Prostate gland (tissue), 2 donors: ENCODE measurements at regions of chr17 and their contacts with region 1.

Region 1: GRCh38 chr17:68247445-68248198 is at the start of gene AMZ2:
- DNase-seq: peak; percentile 91
- H3K4me3 ChIP-seq: peak within 1 kb of the TSS; percentile 79 to 90
- H3K27ac ChIP-seq: peak within 1 kb of the TSS; percentile 91 to 97
- H3K4me1 ChIP-seq: no peaks in the 10 kb centered on the region
- H3K27me3 ChIP-seq: no peaks in the 10 kb centered on the region
- CTCF ChIP-seq: peak in 2 of 4 experiments; percentile 12 to 27
- POLR2A ChIP-seq: peak; percentile 95
- total RNA-seq, gene AMZ2: 51.0 to 57.4 TPM

Region 2: GRCh38 chr17:68205251-68205807 is 42.3 kb before region 1 on chr17:
- intact Hi-C with region 1: loop called (anchors 5 kb)
- DNase-seq: peak; percentile 93
- H3K4me3 ChIP-seq: peak overlapping the region; percentile 84 to 87
- H3K27ac ChIP-seq: peak overlapping the region; percentile 82 to 88
- H3K4me1 ChIP-seq: no peaks in the 10 kb centered on the region
- H3K27me3 ChIP-seq: no peaks in the 10 kb centered on the region
- CTCF ChIP-seq: peak; percentile 90 to 98 (median 94)
- POLR2A ChIP-seq: peak; percentile 87

Region 3: DNA sequence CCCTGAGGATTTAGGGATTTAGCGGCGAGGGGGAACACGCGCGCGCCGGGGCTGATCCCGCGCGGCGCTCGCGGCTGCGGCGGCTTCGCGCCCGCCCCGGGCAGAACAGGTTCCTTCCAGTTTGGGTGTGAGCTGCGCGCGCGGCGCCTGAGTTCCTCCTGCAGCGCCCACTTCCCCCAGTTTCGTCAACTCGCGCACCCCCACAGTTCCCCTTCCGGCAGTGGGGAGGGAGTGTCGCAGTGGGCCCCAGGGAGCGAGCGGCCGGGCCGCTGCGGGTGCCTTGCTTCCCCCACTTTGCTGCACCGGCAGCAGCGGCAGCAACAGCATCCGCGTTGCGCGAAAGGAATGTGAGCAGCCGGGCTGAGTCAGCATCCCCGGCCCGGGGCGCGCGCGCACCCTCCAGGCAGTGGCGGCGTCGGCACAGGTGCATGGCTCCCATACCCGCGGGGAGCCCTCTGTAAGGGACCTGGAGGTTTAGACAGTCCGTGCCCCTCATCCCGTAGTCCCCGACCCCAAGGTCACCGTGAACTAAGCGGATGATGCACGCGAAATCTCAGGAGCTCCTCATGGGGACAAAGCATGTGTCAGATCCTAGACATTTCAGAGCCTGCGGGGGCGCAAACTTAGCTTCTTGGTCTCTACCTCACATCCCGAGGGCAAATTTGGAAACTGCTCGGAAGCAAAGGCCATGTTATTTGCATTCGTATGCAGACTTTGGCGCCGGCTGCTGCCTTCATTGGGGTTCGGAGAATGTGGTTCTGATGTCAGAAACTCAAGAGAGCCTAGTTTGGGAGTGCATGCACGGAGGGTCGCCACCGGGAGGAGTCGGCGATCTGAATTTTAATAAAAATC is 44.4 kb after region 1 on chr17:
- intact Hi-C with region 1: no loop called
- DNase-seq: peak; percentile 39
- H3K4me3 ChIP-seq: peak overlapping the region; percentile 45 to 56
- H3K27ac ChIP-seq: peak overlapping the region; percentile 11 to 26
- H3K4me1 ChIP-seq: peaks cover 12% of the 10 kb centered on the region
- H3K27me3 ChIP-seq: no peaks in the 10 kb centered on the region
- CTCF ChIP-seq: peak in 1 of 4 experiments; percentile 7
- POLR2A ChIP-seq: no peak

Region 4: DNA sequence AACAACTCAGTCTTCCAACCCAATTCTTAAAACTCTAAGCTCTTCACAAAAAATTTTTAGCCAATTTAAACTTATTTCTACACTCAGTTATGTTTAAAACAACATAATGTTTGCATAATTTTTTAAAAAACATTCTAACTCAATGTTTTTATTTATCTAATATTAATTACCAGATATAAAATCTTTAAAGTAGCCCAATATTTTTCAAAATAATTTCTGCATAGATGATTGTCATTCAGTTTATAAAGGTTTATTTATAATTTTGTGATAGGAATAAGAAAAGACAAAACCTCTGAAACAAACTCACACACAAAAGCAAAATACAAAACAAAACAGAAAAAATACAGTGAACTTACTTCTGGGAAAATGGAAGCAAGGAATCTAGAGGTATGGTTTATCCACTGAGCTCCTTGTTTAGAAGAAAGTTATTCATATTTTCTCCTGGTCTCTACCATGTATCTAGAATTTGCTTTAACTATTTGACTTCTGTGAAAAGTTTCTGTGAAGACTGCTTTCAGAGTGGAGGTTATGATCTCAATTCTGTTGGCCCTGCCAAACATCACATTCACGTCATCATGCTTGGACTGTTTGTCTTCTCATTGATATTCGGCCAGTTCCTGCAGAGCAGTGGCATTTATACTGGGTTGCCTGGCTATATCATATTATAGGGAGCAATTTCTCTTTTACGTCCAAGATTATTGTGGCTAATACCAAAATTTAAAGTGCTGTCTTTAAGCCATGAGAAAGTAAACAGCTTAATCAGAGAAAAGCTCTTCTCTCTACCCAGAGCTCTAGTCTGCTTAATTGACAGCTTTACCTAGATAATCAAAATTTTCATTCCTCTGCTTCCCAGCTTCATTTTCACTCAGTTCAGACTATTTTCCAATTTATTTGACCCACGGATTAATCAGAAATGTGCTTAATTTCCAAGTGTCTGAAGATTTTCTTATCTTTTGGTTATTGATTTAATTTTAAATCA is 707.5 kb after region 1 on chr17 and contains the start of gene ABCA8:
- intact Hi-C with region 1: no loop called
- DNase-seq: no peak
- H3K4me3 ChIP-seq: peak within 1 kb of the TSS in 1 of 2 donors; percentile 0
- H3K27ac ChIP-seq: peak within 1 kb of the TSS in 1 of 2 donors; percentile 8
- H3K4me1 ChIP-seq: no peaks in the 10 kb centered on the region
- H3K27me3 ChIP-seq: no peaks in the 10 kb centered on the region
- CTCF ChIP-seq: no peak
- POLR2A ChIP-seq: no peak
- total RNA-seq, gene ABCA8: 7.8 to 111 TPM